ENCODE measurements at regions of chr1 and their contacts with region 1.

Region 1: DNA sequence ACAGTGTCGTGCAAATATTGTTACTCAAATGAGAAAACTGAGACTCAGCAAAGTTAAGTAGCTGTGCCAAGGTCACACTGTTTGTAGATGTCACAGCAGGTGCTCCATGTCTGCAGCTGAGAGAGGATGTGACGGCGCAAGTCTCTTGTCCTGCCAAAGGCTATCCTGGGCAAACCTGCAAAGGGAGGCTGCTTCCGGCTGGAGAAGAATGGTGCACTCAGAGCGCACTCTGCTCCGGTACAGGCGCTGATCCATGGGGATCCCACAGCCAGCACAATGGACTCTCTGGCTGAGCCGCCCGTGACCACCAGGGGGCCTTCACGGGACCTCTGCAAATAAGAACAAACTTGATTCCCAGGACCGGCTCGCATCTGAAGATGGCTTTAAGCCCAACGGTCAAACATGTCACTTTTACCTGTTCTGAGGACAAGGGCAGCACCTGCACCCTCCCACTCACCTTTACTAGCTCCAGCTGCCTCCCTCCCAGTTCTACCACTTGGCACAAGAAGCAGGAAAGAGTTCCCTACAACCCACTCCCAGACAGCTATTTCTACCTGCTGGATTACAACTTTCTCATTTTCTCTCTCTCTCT is 21.9 kb downstream of the RD3 start:
- DNase-seq: peak; percentile 92
- H3K4me3 Mint-ChIP-seq: no peak overlapping the region
- H3K27ac Mint-ChIP-seq: no peak overlapping the region
- H3K4me1 Mint-ChIP-seq: peaks cover 15% of the 10 kb centered on the region
- H3K27me3 Mint-ChIP-seq: no peaks in the 10 kb centered on the region
- CTCF ChIP-seq: peak; percentile 98

Region 2: GRCh38 chr1:211155040-211155439 is 315.0 kb before region 1 on chr1:
- CTCF ChIA-PET with region 1: no interaction called
- POLR2A ChIA-PET with region 1: no interaction called
- intact Hi-C with region 1: no loop called
- DNase-seq: no peak
- H3K4me3 Mint-ChIP-seq: no peak overlapping the region
- H3K27ac Mint-ChIP-seq: no peak overlapping the region
- H3K4me1 Mint-ChIP-seq: no peaks in the 10 kb centered on the region
- H3K27me3 Mint-ChIP-seq: peaks cover 23% of the 10 kb centered on the region
- CTCF ChIP-seq: no peak

Region 3: DNA sequence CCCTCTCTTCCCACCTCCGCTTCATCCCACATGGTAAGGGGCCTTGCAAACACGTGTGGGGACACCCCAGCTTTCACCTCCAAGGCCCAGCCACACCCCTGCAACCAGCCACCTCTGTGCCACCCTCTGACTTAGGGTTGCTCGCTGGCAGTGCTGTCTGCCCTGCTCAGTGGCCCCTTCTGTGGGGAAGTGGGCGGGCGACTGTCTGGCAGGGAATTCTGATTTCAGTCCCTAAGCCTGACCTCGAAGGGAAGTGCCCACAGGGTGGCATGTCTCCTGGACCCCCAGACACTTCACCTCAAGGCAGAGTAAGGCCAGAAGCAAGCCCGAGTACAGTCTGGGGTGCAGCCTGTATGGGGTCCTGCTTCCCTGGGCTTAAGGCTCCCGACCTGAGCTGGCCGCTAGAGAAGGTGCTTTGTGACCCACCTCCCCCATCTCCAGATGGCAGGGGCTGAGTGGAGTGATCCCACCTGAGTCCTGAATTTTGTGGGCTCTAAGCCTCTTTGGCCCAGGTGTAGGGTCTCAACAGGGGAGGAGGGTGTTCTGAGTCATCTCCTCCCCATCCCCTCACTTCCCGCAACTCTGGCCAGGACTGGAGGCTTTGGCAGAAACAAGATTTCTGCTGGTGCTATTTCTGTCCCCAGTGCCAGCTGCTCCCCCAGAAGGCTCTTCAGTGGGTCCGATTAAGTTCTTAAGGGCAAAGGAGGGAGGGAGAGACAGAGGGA is 14.9 kb after region 1 on chr1:
- CTCF ChIA-PET with region 1: interaction called, 147 read pairs
- POLR2A ChIA-PET with region 1: interaction called, 3 read pairs
- intact Hi-C with region 1: no loop called
- DNase-seq: no peak
- H3K4me3 Mint-ChIP-seq: no peak overlapping the region
- H3K27ac Mint-ChIP-seq: no peak overlapping the region
- H3K4me1 Mint-ChIP-seq: no peaks in the 10 kb centered on the region
- H3K27me3 Mint-ChIP-seq: no peaks in the 10 kb centered on the region
- CTCF ChIP-seq: no peak

Region 4: DNA sequence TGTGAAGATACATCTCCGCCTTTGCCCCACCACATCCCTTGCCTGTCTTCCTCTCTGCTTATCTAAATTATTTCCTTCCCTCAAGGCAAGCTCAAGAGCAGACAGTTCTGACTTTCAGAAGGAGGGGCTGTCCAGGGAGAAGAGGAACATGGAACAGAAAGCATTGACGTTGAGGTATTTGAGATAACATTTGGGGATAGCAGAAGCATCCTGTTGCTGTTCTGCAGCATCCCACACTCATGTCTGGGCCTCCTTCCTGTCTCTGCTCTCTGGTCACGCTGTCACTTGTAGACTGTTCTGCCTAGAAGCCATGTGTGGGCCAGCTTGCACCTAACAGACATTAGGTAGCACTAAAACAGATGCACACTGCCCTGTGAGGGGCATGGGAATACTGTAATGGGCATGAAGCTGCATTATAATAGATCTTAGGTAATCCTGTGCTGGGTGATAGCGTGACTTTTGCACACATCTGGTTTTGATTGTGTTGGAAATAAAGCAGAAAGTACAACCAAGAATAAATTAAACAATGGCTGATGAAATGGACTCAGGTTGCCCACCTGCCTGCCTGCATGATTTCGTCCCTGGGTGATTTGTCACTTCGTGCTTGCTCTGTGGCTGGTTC is 22.6 kb after region 1 on chr1:
- CTCF ChIA-PET with region 1: interaction called, 682 read pairs
- POLR2A ChIA-PET with region 1: interaction called, 6 read pairs
- intact Hi-C with region 1: no loop called
- DNase-seq: no peak
- H3K4me3 Mint-ChIP-seq: no peak overlapping the region
- H3K27ac Mint-ChIP-seq: no peak overlapping the region
- H3K4me1 Mint-ChIP-seq: no peaks in the 10 kb centered on the region
- H3K27me3 Mint-ChIP-seq: no peaks in the 10 kb centered on the region
- CTCF ChIP-seq: no peak

Region 5: GRCh38 chr1:211660718-211661222 is 190.7 kb after region 1 on chr1:
- CTCF ChIA-PET with region 1: interaction called, 119 read pairs
- POLR2A ChIA-PET with region 1: no interaction called
- intact Hi-C with region 1: loop called (anchors 1 kb)
- DNase-seq: no peak
- H3K4me3 Mint-ChIP-seq: no peak overlapping the region
- H3K27ac Mint-ChIP-seq: no peak overlapping the region
- H3K4me1 Mint-ChIP-seq: no peaks in the 10 kb centered on the region
- H3K27me3 Mint-ChIP-seq: no peaks in the 10 kb centered on the region
- CTCF ChIP-seq: no peak